Activated naive CD4-positive, alpha-beta T cell treated with anti-CD3 and anti-CD28 coated beads for 36 hours (primary cell): ENCODE measurements at regions of chr19 and their contacts with region 1.

Region 1: DNA sequence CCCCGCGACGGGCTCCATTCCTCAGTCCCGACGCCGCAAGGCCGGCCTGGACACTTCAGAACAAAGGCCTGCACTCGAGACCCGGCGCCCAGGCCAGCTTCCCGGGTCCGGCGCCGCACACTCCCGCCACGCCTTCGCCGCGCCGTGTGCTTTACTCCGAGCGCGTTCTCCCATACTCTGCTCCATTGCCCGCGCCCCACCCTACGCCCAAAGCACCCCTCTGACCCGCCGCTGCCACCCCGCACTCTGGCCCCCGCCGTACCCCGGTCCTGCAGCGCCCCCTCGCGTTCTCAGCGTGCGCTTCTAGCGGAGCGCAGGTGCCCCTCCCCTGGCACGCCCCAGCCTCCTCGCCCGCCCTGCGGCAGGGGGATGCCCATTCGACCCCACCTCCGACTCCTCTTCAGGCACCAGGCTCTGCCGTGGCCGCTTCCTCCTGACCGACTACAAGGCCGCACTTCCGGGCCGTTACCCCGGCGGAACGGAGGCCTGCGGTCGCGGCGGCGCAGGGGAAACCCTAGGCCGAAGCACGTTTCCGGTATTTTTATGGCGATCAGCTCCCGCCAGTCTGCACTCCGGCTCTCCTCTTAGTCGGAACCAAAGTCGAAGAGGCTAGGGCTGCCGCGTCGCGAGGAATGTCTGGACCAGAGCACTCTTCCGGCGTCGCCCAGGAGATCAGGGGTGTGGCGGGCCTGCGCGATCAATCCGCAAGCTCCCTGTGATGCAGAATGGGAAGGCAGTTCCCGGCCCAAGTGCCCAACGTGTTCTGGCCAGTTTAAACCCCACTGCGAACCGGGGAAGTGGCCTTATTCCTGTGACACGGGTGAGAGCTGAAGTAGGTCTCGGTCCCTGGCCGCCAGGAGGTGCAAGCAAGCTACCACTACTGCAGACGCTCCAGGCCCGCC is at the start of gene ZBTB45:
- DNase-seq: peak; percentile 94
- H3K4me3 Mint-ChIP-seq: peak within 1 kb of the TSS; percentile 93
- H3K27ac Mint-ChIP-seq: peak within 1 kb of the TSS; percentile 98
- H3K4me1 Mint-ChIP-seq: peaks cover 38% of the 10 kb centered on the region
- H3K27me3 Mint-ChIP-seq: no peaks in the 10 kb centered on the region
- total RNA-seq, gene ZBTB45: 5.5 to 6.0 TPM

Region 2: DNA sequence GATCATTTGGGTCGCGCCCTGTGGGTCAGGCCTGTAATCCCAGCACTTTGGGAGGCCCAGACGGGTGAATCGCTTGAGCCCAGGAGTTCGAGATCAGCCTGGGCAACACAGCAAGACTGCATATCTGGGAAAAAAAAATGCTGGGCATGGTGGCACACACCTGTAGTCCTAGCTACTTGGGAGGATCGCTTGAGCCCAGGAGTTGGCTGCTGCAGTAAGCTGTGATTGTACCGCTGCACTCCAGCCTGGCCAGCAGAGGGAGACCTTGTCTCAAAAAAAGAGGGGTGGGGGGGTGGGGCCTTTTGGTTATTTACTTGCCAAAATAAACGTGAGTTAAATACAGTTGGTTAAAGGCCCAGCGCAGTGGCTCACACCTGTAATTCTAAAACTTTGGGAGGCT is 300.7 kb before region 1 on chr19:
- CTCF ChIA-PET with region 1: interaction called, 3 read pairs
- intact Hi-C with region 1: loop called (anchors 1 kb)
- DNase-seq: peak; percentile 60
- H3K4me3 Mint-ChIP-seq: no peak overlapping the region
- H3K27ac Mint-ChIP-seq: no peak overlapping the region
- H3K4me1 Mint-ChIP-seq: no peaks in the 10 kb centered on the region
- H3K27me3 Mint-ChIP-seq: no peaks in the 10 kb centered on the region

Region 3: GRCh38 chr19:58475714-58476497 is 43.7 kb before region 1 on chr19 and contains the start of gene ZNF446:
- CTCF ChIA-PET with region 1: interaction called, 3 read pairs
- intact Hi-C with region 1: loop called (anchors 1 kb)
- DNase-seq: peak; percentile 97
- H3K4me3 Mint-ChIP-seq: peak within 1 kb of the TSS; percentile 94
- H3K27ac Mint-ChIP-seq: peak within 1 kb of the TSS; percentile 97
- H3K4me1 Mint-ChIP-seq: peaks cover 13% of the 10 kb centered on the region
- H3K27me3 Mint-ChIP-seq: no peaks in the 10 kb centered on the region
- total RNA-seq, gene ZNF446: 2.6 to 2.9 TPM

Region 4: GRCh38 chr19:58558623-58559274 is 39.1 kb after region 1 on chr19:
- CTCF ChIA-PET with region 1: interaction called, 21 read pairs
- intact Hi-C with region 1: loop called (anchors 1 kb)
- DNase-seq: peak; percentile 100
- H3K4me3 Mint-ChIP-seq: peak overlapping the region; percentile 90
- H3K27ac Mint-ChIP-seq: peak overlapping the region; percentile 100
- H3K4me1 Mint-ChIP-seq: peaks cover 66% of the 10 kb centered on the region
- H3K27me3 Mint-ChIP-seq: no peaks in the 10 kb centered on the region

Region 5: DNA sequence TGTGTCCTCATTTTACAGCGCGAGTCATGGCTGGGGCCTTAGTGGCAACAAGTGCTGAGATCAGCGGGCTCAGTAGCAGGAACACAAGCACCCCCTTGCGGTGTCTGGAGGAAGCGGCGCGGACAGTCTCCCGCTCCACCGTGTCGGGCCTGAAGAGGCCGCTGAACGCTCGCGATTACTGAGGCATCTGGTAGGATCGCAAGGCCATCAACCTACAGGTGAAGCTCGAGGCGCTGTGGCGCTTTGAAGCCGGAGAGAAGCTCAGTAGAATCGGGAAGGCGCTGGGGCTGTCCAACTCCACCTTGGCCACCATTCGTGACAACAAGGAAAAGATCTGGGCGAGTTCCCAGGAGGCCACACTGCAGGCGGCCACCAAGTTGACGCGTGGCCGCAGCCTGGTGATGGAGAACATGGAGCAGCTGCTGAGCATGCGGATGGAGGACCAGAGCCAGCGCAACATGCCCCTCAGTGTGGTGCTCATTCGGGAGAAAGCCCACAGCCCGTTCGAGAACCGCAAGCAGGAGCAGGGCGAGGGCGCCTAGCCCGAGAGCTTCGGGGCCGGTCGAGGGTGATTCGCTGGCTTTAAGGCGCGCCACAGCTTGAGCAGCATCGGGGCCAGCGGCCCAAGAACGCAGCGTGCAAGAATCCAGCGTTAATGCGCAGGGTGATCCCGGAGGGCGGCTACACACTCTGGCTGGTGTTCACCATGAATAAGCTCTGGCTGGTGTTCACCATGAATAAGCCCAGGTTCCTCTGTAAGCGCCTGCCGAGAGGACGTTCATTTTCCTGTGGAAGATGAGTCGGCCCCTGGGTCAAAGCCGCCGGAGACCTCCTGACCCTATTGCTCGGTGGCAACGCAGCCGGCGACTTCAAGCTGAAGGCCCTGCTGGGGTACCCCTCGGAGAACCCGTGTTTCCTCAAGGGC is 61.9 kb after region 1 on chr19:
- CTCF ChIA-PET with region 1: interaction called, 52 read pairs
- intact Hi-C with region 1: loop called (anchors 1 kb)
- DNase-seq: peak; percentile 98
- H3K4me3 Mint-ChIP-seq: no peak overlapping the region
- H3K27ac Mint-ChIP-seq: peak overlapping the region; percentile 71
- H3K4me1 Mint-ChIP-seq: peaks cover 28% of the 10 kb centered on the region
- H3K27me3 Mint-ChIP-seq: no peaks in the 10 kb centered on the region